ENCODE measurements at regions of chr7 and their contacts with region 1.

Region 1: DNA sequence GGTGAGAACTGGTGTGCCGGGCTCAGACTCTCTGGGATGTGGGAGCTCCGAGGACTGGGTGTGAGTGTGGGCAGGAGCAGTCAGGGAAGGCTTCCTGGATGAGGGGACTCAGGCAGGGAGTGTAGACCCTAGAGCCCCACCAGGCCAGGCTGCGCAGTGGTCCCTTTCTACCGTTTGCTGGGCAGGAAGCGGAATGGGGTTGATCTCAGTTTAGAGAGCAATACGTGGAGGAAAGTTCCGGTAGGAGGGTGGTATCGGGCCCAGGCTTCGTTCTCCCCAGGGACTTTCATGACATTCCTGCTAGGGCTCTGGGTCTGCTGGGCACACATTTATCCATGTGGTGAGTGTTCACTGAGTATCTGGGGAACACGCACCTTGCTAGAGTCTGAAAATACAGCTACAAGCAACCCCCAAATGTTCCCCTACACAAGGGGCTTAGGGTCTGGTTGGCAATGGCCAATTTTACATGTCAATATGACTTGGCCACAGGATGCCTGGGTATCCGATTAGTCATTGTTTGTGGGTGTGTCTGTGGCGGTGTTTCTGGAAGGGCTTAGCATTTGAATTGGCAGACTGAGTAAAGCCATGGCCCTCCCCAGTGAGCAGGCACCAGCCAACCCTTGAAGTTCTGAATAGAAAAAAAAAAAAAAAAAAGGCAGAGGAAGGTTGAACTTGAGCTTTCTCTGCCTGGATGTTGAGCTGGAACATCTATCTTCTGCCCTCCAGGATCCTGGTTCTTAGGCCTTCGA is 20.8 kb downstream of the GHRHR start:
- DNase-seq: peak in 1 of 2 donors; percentile 74
- H3K4me3 ChIP-seq: no peak overlapping the region
- CTCF ChIP-seq: no peak
- POLR2A ChIP-seq: no peak

Region 2: DNA sequence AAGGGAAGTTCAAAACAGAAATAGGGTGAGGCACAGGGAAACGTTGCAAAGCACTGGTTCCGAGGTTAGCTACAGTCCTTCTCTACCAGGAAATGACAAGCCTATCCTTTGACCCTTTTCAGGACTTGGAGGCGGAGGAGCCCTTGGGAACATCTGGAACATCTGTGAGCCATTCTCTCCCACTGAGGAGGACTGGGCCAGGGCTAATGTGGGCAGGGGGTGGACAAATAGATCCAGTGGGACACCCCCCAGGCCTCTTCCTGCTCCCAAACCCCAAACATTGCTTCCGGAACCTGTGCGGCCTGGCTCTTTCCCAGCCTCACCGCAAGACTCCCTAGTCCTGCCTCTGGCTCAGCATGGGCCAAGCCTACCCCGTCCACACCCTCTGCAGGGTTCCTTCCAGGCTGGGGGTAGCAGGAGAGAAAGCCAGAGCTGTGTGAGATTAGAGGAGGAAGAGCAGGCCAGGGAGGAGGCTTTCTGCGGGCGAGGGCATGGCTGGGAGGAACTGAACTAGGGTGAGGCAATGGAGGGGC is 15.7 kb after region 1 on chr7:
- intact Hi-C with region 1: no loop called
- DNase-seq: no peak
- H3K4me3 ChIP-seq: no peak overlapping the region
- CTCF ChIP-seq: no peak
- POLR2A ChIP-seq: no peak

Region 3: GRCh38 chr7:31120800-31121513 is 136.4 kb after region 1 on chr7:
- intact Hi-C with region 1: loop called (anchors 1 kb)
- DNase-seq: no peak
- H3K4me3 ChIP-seq: no peak overlapping the region
- CTCF ChIP-seq: no peak
- POLR2A ChIP-seq: no peak

Measured in lower leg skin (tissue), 4 donors.